MCF 10A (cell line): ENCODE measurements at regions of chr6 and their contacts with region 1.

Region 1: DNA sequence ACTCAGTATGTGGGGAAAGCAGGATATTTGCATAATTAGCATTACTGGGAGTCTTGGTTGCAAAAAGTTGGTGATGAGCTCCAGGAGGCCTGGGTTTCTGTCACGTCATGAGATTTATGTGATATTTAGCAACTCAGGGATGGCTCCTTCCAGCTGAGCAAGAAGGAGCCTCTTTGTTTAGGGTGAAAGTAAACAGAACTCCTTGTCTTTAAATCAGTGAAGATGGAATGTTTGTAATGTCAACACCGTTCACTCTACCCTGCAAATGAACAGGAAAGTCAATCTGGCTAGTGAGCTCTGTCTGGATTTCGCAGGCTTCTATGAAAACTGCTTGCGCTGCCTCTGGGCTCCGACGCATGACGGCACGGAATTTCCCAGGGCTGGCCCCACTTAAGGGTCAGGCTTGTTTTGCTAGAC is 86.9 kb downstream of the PXDC1 start:
- DNase-seq: no peak
- H3K4me3 Mint-ChIP-seq: no peak overlapping the region
- H3K27ac Mint-ChIP-seq: no peak overlapping the region
- H3K4me1 Mint-ChIP-seq: no peaks in the 10 kb centered on the region
- H3K27me3 Mint-ChIP-seq: no peaks in the 10 kb centered on the region
- CTCF ChIP-seq: no peak

Region 2: GRCh38 chr6:3644739-3645012 is 20.0 kb before region 1 on chr6:
- CTCF ChIA-PET with region 1: no interaction called
- POLR2A ChIA-PET with region 1: no interaction called
- intact Hi-C with region 1: no loop called
- DNase-seq: no peak
- H3K4me3 Mint-ChIP-seq: no peak overlapping the region
- H3K27ac Mint-ChIP-seq: no peak overlapping the region
- H3K4me1 Mint-ChIP-seq: peaks cover 7% of the 10 kb centered on the region
- H3K27me3 Mint-ChIP-seq: no peaks in the 10 kb centered on the region
- CTCF ChIP-seq: no peak

Region 3: DNA sequence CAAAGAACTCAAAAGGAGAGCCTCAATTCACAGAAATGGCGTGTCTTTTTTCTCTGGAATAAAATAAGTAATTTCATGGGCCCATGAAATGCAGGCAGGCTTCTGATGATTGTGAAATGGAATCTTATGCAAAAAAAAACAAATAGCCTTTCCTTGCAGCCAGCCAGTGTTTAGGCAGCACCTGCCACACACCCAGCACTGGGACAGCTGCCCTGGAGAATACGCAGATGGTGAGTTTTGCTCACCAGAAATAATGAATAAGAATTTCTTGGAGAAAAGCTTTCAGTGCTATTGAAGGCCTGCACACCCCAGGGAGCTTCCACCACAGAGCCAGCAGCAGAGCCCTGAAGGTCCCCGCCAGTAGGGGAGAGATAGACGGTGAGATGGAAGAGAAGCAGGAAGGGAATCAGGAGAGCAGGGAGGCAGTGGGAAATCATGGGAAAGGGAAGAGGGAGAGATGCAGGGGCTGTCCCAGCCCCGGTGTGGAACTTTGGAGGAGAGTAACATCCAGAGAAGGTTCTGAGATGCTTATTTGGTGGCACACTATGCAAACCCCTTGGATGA is 32.0 kb after region 1 on chr6:
- CTCF ChIA-PET with region 1: interaction called, 10 read pairs
- POLR2A ChIA-PET with region 1: interaction called, 3 read pairs
- intact Hi-C with region 1: no loop called
- DNase-seq: peak; percentile 62
- H3K4me3 Mint-ChIP-seq: no peak overlapping the region
- H3K27ac Mint-ChIP-seq: no peak overlapping the region
- H3K4me1 Mint-ChIP-seq: peaks cover 26% of the 10 kb centered on the region
- H3K27me3 Mint-ChIP-seq: no peaks in the 10 kb centered on the region
- CTCF ChIP-seq: no peak